CD4-positive, alpha-beta T cell (primary cell): ENCODE measurements at regions of chr10 and their contacts with region 1.

Region 1: DNA sequence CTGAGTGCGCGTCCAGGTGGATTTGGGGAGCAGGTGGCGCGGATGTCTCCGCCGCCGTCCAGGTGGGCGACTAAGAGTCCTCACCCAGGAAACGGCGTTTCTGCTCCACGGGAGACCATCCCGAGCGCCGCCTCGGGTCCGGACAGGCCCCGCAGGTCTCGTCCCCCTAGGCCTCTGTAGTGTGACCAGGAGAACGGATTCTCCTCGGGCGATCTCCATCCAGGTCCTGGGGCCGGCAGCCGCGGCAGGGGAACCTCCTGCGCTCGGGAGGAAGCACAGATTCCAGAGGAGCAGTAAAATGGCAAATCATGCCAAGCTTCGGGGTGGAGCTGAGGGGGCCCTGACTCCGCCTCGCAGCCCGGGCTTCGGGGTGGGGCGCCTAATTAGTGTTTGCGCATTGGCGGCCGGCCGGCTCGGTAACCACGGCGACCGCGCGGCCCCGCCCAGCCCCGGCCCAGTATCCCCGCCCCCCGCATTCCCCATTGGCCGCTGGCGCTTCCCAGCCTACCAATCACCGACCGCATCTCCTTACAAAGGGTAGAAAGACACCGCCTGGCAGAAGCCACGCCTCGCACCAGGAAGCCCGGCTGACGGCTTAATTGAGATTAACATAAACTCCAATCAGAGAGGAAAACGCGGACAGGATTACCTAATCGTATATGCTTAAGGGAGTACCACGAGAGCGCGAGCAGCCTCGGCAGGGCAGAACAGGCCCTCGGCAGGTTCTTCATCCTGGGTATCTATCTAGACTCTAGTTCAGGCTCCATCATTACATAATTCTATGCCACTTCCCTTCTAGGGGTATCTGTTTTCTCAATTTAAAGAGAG is 168.6 kb downstream of the ARHGAP12 start:
- DNase-seq: peak; percentile 90 to 99 (median 94)
- ATAC-seq: peak; percentile 92
- H3K4me3 ChIP-seq: peak overlapping the region; percentile 99
- H3K4me3 Mint-ChIP-seq: peak overlapping the region; percentile 88
- H3K27ac ChIP-seq: peak overlapping the region; percentile 87 to 92
- H3K27ac Mint-ChIP-seq: peak overlapping the region; percentile 96
- H3K4me1 ChIP-seq: peaks cover 19% of the 10 kb centered on the region
- H3K4me1 Mint-ChIP-seq: peaks cover 19% of the 10 kb centered on the region
- H3K27me3 ChIP-seq: no peaks in the 10 kb centered on the region
- H3K27me3 Mint-ChIP-seq: no peaks in the 10 kb centered on the region
- CTCF ChIP-seq: no peak

Region 2: DNA sequence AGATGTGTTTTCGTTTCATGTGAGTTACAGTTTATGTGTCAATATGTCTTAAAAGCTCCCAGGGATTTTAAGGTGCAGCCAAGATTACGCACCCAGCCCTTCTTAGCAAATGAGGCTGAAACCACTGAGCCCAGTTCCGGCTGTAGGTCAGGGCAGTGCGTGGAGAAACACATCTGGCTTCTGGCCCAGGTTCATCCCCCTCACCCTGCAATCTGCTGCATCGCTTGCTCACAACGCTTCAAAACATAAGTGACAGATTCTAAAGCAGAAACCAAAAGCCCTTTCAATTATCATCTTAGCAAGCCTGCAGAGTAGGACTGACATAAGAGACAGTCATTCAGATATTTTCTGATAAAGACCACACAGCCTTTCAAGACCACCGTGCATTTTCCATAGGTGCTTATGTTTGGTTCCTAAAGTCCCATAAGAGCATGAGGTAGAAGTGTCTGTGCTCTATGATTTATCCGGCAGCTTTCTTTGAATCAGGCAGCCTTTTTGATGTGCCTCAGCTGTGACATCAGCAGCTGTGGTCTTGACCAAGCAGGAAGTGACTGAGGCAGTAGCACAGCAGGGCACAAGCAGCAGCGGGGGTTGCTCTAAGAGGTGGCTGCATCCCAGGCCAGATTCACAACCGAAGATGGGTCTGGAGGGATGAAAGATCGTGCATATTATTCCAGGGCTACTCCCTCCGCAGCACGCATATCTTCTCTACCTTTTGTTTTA is 1058.4 kb before region 1 on chr10:
- CTCF ChIA-PET with region 1: no interaction called
- POLR2A ChIA-PET with region 1: interaction called, 3 read pairs
- intact Hi-C with region 1: loop called (anchors 5 to 10 kb)
- DNase-seq: peak; percentile 41 to 87 (median 62)
- ATAC-seq: peak; percentile 65
- H3K4me3 ChIP-seq: peak overlapping the region; percentile 43
- H3K4me3 Mint-ChIP-seq: peak overlapping the region; percentile 85
- H3K27ac ChIP-seq: peak overlapping the region; percentile 51 to 74
- H3K27ac Mint-ChIP-seq: peak overlapping the region; percentile 99
- H3K4me1 ChIP-seq: peaks cover 81% of the 10 kb centered on the region
- H3K4me1 Mint-ChIP-seq: peaks cover 87% of the 10 kb centered on the region
- H3K27me3 ChIP-seq: no peaks in the 10 kb centered on the region
- H3K27me3 Mint-ChIP-seq: no peaks in the 10 kb centered on the region
- CTCF ChIP-seq: no peak

Region 3: DNA sequence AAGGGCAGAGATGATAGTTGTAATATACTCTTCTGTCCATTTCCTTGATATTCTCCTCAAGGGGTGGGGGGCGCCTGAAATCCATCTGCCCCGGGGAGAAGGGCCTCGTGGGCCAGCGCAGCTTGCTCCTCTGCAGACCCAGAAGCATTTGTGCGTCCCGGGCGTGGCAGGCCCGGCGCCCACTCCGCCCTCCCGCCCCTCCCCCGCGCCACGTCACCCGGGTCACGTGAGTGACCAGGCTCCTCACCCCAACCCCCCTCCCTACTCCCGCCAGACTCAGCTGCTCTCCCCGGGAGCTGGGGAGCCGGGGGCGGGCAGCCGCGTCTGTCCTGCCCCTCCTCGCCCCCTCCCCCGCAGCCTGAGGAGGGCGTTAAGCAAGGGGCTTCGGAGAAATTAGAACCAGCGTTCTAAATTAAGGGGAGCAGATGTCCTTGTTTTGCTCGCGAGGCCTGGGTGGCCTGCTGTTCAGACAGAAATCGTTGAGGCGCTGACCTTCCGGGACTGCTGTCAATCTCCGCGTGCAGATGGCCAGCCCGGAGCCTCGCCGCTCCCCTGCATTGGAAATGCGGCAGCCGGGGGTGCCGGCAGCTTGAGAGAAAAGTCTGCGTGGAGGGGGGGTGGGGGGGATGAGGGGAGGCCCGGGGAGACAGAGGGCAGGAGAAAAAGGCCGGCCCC is 626.2 kb before region 1 on chr10:
- CTCF ChIA-PET with region 1: no interaction called
- POLR2A ChIA-PET with region 1: no interaction called
- intact Hi-C with region 1: loop called in 1 of 2 experiments (anchors 5 kb)
- DNase-seq: peak; percentile 45 to 85 (median 66)
- ATAC-seq: peak; percentile 63
- H3K4me3 ChIP-seq: peak overlapping the region; percentile 83
- H3K4me3 Mint-ChIP-seq: peak overlapping the region; percentile 84
- H3K27ac ChIP-seq: peak overlapping the region in 1 of 2 donors; percentile 45
- H3K27ac Mint-ChIP-seq: peak overlapping the region; percentile 86
- H3K4me1 ChIP-seq: peaks cover 41% of the 10 kb centered on the region
- H3K4me1 Mint-ChIP-seq: peaks cover 50% of the 10 kb centered on the region
- H3K27me3 ChIP-seq: no peaks in the 10 kb centered on the region
- H3K27me3 Mint-ChIP-seq: no peaks in the 10 kb centered on the region
- CTCF ChIP-seq: no peak

Region 4: DNA sequence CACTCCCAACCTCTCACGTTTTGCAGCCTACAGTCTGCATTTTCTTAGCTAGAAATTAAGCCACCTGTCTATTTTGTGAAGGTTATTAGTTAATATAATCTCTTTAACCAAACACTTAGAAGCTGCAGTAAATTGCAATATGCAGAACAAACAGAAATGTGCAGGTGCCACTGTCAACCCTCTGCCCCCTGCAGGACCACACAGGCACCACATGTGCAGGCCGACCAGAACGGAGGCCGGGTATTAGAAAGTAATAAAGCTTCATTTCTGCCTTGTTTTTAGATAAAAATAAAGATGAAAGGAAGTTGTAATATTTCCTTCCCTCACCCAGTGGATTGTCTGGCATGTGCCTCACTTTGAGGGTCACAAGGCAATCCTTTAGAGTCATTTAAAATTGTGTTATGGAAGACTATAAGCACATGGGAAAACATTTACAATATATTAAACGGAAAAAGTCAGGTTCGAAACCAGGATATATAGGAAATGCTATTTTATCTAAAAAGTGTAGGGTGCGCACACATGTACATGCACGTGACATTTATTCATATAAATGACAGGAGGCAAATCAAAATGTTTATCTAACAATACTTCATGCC is 10.4 kb after region 1 on chr10:
- CTCF ChIA-PET with region 1: interaction called, 11 read pairs
- POLR2A ChIA-PET with region 1: interaction called, 8 read pairs
- intact Hi-C with region 1: no loop called
- DNase-seq: peak; percentile 43 to 76 (median 54)
- ATAC-seq: peak; percentile 97
- H3K4me3 ChIP-seq: no peak overlapping the region
- H3K4me3 Mint-ChIP-seq: no peak overlapping the region
- H3K27ac ChIP-seq: no peak overlapping the region
- H3K27ac Mint-ChIP-seq: no peak overlapping the region
- H3K4me1 ChIP-seq: no peaks in the 10 kb centered on the region
- H3K4me1 Mint-ChIP-seq: no peaks in the 10 kb centered on the region
- H3K27me3 ChIP-seq: no peaks in the 10 kb centered on the region
- H3K27me3 Mint-ChIP-seq: no peaks in the 10 kb centered on the region
- CTCF ChIP-seq: peak; percentile 89

Region 5: GRCh38 chr10:32055813-32056600 is 296.0 kb after region 1 on chr10 and contains the start of gene KIF5B:
- CTCF ChIA-PET with region 1: no interaction called
- POLR2A ChIA-PET with region 1: no interaction called
- intact Hi-C with region 1: loop called in 1 of 2 experiments (anchors 5 kb)
- DNase-seq: peak; percentile 74 to 95 (median 84)
- ATAC-seq: peak; percentile 79
- H3K4me3 ChIP-seq: peak within 1 kb of the TSS; percentile 98
- H3K4me3 Mint-ChIP-seq: peak within 1 kb of the TSS; percentile 95
- H3K27ac ChIP-seq: peak within 1 kb of the TSS; percentile 77 to 92
- H3K27ac Mint-ChIP-seq: peak within 1 kb of the TSS; percentile 95
- H3K4me1 ChIP-seq: peaks cover 18% of the 10 kb centered on the region
- H3K4me1 Mint-ChIP-seq: peaks cover 54% of the 10 kb centered on the region
- H3K27me3 ChIP-seq: no peaks in the 10 kb centered on the region
- H3K27me3 Mint-ChIP-seq: no peaks in the 10 kb centered on the region
- CTCF ChIP-seq: no peak
- total RNA-seq, gene KIF5B: 58.3 to 59.0 TPM

Region 6: DNA sequence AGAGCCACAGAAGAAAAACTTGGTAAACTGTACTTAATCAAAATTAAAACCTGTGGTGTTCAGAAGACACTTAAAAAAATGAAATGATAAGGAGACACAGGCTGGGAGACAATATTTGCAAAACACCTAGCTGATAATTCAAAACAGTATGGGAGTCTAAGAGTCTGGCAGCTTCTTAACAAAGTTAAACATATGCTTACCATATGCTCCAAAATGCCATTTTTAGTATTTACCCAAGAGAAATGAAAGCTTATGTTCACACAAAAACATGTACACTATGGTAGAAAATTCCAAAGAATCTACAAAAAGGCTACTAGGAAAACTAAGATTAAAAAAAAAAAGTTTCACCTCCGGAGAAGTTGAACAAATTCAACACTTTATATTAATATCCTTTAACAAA is 1149.4 kb after region 1 on chr10:
- CTCF ChIA-PET with region 1: no interaction called
- POLR2A ChIA-PET with region 1: no interaction called
- intact Hi-C with region 1: no loop called
- DNase-seq: no peak
- ATAC-seq: no peak
- H3K4me3 ChIP-seq: no peak overlapping the region
- H3K4me3 Mint-ChIP-seq: no peak overlapping the region
- H3K27ac ChIP-seq: no peak overlapping the region
- H3K27ac Mint-ChIP-seq: peak overlapping the region; percentile 44
- H3K4me1 ChIP-seq: no peaks in the 10 kb centered on the region
- H3K4me1 Mint-ChIP-seq: peaks cover 8% of the 10 kb centered on the region
- H3K27me3 ChIP-seq: no peaks in the 10 kb centered on the region
- H3K27me3 Mint-ChIP-seq: no peaks in the 10 kb centered on the region
- CTCF ChIP-seq: no peak